ENCODE measurements at regions of chr3 and their contacts with region 1.

Region 1: DNA sequence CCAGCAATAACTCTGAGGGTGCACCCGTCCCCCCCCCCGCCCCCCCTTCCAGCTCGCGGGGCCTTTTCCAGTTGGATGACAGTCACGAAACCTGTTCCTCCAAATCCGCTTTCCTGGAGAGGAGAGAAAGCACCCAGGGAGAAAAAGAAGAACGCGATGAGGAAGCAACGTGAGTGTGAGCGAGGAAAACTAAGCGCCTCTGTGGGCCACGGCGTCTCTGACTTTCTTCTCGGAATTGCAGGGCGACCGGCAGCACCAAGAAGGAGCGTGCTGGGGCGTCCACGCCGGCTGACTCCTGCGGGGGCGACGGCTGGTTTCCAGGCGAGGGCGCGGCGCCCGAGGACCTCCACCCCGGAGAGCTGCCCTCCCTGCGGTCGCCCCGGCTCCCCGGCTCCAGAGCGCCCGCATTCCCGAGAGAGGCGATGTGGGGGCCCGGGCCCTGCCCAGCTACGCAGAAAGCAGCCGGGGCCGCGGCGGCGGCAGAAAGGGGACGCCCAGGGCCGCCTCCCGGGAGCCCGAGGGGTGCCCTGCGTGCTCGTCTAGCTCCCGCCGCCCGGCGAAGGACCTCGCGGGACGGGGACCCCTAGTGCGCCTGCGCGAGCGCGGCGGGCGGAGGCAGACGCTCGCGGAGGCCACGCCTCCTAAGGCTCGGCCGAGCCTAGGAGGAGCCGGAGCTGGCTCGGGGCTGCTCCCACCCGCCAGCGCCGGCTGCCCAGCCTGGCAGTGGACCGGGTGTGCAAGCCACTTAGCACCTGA is 15.4 kb upstream of the ADIPOQ start:
- DNase-seq: peak; percentile 84
- H3K4me3 ChIP-seq: peak overlapping the region; percentile 50 to 74 (median 65)
- H3K27ac ChIP-seq: peak overlapping the region; percentile 67 to 74 (median 70)
- H3K4me1 ChIP-seq: peaks cover 0 to 29% (median 13%) of the 10 kb centered on the region in 4 donors
- H3K27me3 ChIP-seq: peaks cover 18 to 71% (median 40%) of the 10 kb centered on the region in 3 donors
- CTCF ChIP-seq: no peak
- EP300 ChIP-seq: no peak
- POLR2A ChIP-seq: no peak

Region 2: GRCh38 chr3:186108941-186109865 is 718.0 kb before region 1 on chr3 and contains the start of gene ETV5:
- intact Hi-C with region 1: loop called (anchors 5 kb)
- DNase-seq: peak; percentile 100
- H3K4me3 ChIP-seq: peak within 1 kb of the TSS; percentile 54 to 70 (median 64)
- H3K27ac ChIP-seq: peak within 1 kb of the TSS; percentile 77 to 87 (median 83)
- H3K4me1 ChIP-seq: peaks cover 0 to 41% (median 34%) of the 10 kb centered on the region in 4 donors
- H3K27me3 ChIP-seq: peaks cover 0 to 47% (median 30%) of the 10 kb centered on the region in 3 donors
- CTCF ChIP-seq: peak in 1 of 4 experiments; percentile 1
- EP300 ChIP-seq: no peak
- POLR2A ChIP-seq: peak; percentile 29 to 31
- total RNA-seq, gene ETV5: 5.8 to 7.8 (median 6.9) TPM

Region 3: GRCh38 chr3:186570096-186570940 is 256.8 kb before region 1 on chr3 and contains the start of gene DNAJB11:
- intact Hi-C with region 1: no loop called
- DNase-seq: peak; percentile 100
- H3K4me3 ChIP-seq: peak within 1 kb of the TSS; percentile 71 to 95 (median 91)
- H3K27ac ChIP-seq: peak within 1 kb of the TSS; percentile 91 to 97 (median 94)
- H3K4me1 ChIP-seq: peaks cover 0 to 46% (median 35%) of the 10 kb centered on the region in 4 donors
- H3K27me3 ChIP-seq: no peaks in the 10 kb centered on the region
- CTCF ChIP-seq: no peak
- EP300 ChIP-seq: no peak
- POLR2A ChIP-seq: peak; percentile 63 to 83
- total RNA-seq, gene DNAJB11: 17.2 to 33.1 (median 26.2) TPM

Region 4: DNA sequence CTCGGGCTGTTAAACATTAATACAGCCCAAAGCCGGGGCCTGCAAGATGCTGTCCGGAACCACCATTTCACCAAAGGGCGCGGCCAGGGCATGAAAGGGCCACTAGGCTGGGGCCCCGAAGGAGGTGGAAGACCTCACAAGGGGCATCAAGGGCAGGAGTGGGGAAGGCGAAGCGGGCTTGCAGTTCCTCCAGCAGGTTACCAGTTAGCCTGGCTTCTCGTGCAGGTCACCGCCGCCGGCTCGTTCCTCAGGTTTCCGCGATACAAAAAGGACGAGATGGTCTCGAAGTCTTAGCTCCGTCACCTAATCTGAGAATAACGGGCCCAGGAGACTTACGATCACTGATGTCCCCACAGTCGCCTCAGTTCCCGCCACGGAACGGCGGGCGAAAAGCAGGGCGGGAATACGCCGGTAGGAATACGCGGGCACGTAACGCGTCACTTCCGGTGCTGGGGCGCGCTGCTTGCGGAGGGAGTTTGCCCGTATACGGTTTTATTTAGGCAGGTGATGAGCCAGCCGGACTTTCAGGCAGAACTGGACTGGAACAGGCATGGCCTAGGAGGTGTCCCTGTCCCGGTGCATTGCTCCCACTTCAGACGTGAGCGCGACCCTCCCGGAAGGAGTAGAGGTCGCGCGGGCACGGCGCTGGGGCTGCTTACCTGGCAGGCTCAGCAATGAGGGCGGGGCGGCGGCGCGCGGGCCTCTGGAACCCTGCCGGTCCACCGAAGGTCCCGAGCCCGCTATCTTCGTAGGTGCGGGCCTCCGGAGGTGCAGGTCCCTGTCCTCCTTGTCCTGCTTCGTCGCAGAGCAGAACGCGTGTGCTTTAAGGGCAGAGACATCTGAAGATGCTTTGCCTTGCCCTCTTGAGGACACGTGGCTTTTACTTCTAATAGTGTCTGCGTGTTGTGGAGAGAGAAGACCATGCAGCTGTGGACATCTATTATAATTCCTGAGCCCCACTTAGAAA is 20.8 kb before region 1 on chr3 and contains the start of gene RFC4:
- intact Hi-C with region 1: loop called (anchors 2 kb)
- DNase-seq: peak; percentile 93
- H3K4me3 ChIP-seq: peak within 1 kb of the TSS; percentile 49 to 84 (median 69)
- H3K27ac ChIP-seq: peak within 1 kb of the TSS; percentile 83 to 92 (median 86)
- H3K4me1 ChIP-seq: peaks cover 0 to 17% (median 13%) of the 10 kb centered on the region in 4 donors
- H3K27me3 ChIP-seq: no peaks in the 10 kb centered on the region
- CTCF ChIP-seq: no peak
- EP300 ChIP-seq: peak in 1 of 4 donors; percentile 69
- POLR2A ChIP-seq: peak in 1 of 2 donors; percentile 59
- total RNA-seq, gene RFC4: 8.7 to 26.6 (median 18.5) TPM

Region 5: GRCh38 chr3:187164885-187165543 is 337.9 kb after region 1 on chr3:
- intact Hi-C with region 1: loop called (anchors 5 kb)
- DNase-seq: no peak
- H3K4me3 ChIP-seq: no peak overlapping the region
- H3K27ac ChIP-seq: no peak overlapping the region
- H3K4me1 ChIP-seq: peaks cover 0 to 21% (median 10%) of the 10 kb centered on the region in 4 donors
- H3K27me3 ChIP-seq: no peaks in the 10 kb centered on the region
- CTCF ChIP-seq: peak; percentile 60 to 72 (median 69)
- EP300 ChIP-seq: no peak
- POLR2A ChIP-seq: no peak

Measured in sigmoid colon (tissue), 7 donors.